MCF 10A (cell line): ENCODE measurements at regions of chr5 and their contacts with region 1.

Region 1: DNA sequence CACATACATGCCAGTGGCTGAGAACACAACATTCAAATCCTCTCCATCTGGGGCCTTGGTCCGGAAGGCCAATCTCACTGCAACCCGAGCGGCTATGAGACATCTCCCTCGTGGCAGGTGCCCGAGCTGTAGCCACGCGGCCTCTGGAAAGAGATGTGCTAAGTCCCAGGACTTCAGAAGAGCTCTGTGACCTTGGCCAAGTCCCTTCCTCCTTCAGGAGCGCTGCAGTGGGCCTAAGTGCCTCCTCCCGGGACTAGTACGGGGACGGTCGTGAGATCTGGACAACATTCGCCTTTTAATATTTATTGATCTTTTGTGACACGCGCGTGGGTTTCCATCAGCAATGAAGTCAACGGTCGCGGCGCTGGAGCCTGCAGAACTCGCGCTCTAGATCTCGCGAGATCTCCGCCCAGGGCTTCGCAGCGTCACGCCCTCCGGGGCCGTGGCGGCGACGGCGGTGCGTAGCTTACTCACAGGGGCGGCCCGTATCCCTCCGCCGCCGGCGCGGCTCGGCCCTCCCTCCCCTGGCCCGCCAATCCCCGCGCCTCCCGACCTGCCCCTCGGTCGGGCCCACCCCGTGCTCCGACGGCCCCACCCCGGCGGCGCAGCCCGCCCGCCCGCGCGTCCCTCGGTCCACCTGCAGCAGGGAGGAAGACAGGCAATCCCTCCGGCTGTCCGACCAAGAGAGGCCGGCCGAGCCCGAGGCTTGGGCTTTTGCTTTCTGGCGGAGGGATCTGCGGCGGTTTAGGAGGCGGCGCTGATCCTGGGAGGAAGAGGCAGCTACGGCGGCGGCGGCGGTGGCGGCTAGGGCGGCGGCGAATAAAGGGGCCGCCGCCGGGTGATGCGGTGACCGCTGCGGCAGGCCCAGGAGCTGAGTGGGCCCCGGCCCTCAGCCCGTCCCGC is at the start of gene UBE2D2:
- DNase-seq: peak; percentile 98
- H3K4me3 Mint-ChIP-seq: peak within 1 kb of the TSS; percentile 85
- H3K27ac Mint-ChIP-seq: peak within 1 kb of the TSS; percentile 88
- H3K4me1 Mint-ChIP-seq: peaks cover 12% of the 10 kb centered on the region
- H3K27me3 Mint-ChIP-seq: no peaks in the 10 kb centered on the region
- CTCF ChIP-seq: no peak
- total RNA-seq, gene UBE2D2: 306 and 329 TPM in 2 replicates

Region 2: DNA sequence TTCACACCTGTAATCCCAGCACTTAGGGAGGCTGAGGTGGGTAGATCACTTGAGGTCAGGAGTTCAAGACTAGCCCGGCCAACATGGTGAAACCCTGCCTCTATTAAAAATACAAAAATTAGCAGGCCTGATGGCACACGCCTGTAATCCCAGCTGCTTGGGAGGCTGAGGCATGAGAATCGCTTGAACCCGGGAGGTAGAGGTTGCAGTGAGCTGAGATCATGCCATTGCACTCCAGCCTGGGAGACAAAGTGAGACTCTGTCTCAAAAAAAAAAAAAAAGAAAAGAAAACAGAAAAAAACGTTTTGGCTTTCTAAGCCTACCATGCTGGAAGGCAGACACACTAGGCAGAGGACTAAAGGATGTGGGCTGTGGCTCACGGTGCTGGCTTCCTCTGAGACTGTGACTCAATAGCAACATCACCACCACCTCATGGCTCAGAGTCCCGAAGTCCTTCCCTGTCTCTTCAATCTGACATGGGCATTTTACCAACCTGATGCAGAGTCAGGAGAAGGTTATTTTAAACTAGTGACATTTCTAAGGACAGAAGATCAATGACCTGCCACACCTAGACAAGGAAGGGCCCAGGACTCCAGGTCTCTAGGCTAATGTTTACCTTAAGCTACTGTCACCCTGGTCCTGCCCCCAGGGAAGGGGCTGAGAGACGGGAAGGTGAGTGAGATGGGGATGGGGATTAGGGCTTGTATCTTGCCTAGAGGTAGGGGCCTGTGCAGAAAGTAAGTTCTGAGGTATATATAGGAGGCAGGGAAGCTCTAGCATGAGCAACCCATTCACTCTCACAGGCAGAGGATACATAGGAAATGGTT is 102.2 kb before region 1 on chr5:
- CTCF ChIA-PET with region 1: no interaction called
- POLR2A ChIA-PET with region 1: no interaction called
- intact Hi-C with region 1: no loop called
- DNase-seq: peak; percentile 33
- H3K4me3 Mint-ChIP-seq: no peak overlapping the region
- H3K27ac Mint-ChIP-seq: no peak overlapping the region
- H3K4me1 Mint-ChIP-seq: peaks cover 6% of the 10 kb centered on the region
- H3K27me3 Mint-ChIP-seq: no peaks in the 10 kb centered on the region
- CTCF ChIP-seq: no peak

Region 3: DNA sequence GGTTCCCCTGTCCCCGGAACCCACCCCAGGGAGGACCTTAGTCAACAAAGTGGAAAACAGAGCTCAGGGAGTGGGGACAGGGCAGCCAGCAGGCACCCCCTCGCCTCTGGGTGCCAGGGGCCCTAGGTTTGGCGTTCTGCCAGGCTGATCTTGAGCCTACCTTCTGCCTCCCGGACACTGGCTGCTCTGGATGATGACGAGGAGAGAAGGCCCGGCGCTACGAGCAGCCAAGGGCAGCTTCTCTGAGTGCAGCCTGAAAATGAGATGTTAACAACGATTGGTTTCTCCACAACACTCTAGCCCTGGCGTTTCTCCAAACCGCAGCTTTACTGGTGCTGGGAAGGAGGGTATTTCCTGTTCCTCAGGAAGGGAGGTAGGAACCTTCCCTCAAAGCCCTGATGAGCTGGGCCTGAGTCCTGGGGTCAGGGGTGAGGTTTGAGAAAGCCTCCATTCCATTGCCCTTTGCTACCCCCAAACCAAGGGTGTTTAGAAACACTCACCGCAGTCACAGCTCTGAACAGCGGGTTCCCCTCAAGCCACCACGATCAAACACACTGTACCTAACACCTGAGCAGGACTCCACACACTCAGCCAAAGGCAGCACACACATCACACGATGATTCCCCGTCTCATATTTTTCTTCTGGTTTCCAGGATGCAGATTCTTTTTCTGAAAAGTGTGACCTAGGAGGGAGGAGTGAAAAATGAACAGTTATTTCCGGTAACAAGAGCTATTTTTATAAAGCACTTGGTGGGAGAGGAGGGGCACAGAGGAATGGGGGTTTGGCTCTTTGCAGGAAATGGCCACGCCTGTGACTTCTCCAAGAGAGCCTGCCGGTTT is 78.7 kb before region 1 on chr5 and contains the start of gene STING1:
- CTCF ChIA-PET with region 1: interaction called, 3 read pairs
- POLR2A ChIA-PET with region 1: interaction called, 17 read pairs
- intact Hi-C with region 1: no loop called
- DNase-seq: peak; percentile 100
- H3K4me3 Mint-ChIP-seq: peak within 1 kb of the TSS; percentile 77
- H3K27ac Mint-ChIP-seq: peak within 1 kb of the TSS; percentile 92
- H3K4me1 Mint-ChIP-seq: peaks cover 24% of the 10 kb centered on the region
- H3K27me3 Mint-ChIP-seq: no peaks in the 10 kb centered on the region
- CTCF ChIP-seq: peak; percentile 1
- total RNA-seq, gene STING1: 33.1 and 35.1 TPM in 2 replicates

Region 4: GRCh38 chr5:139600336-139600949 is 39.4 kb after region 1 on chr5:
- CTCF ChIA-PET with region 1: interaction called, 4 read pairs
- POLR2A ChIA-PET with region 1: interaction called, 6 read pairs
- intact Hi-C with region 1: loop called (anchors 5 kb)
- DNase-seq: peak; percentile 84
- H3K4me3 Mint-ChIP-seq: no peak overlapping the region
- H3K27ac Mint-ChIP-seq: peak overlapping the region; percentile 40
- H3K4me1 Mint-ChIP-seq: peaks cover 16% of the 10 kb centered on the region
- H3K27me3 Mint-ChIP-seq: no peaks in the 10 kb centered on the region
- CTCF ChIP-seq: no peak

Region 5: DNA sequence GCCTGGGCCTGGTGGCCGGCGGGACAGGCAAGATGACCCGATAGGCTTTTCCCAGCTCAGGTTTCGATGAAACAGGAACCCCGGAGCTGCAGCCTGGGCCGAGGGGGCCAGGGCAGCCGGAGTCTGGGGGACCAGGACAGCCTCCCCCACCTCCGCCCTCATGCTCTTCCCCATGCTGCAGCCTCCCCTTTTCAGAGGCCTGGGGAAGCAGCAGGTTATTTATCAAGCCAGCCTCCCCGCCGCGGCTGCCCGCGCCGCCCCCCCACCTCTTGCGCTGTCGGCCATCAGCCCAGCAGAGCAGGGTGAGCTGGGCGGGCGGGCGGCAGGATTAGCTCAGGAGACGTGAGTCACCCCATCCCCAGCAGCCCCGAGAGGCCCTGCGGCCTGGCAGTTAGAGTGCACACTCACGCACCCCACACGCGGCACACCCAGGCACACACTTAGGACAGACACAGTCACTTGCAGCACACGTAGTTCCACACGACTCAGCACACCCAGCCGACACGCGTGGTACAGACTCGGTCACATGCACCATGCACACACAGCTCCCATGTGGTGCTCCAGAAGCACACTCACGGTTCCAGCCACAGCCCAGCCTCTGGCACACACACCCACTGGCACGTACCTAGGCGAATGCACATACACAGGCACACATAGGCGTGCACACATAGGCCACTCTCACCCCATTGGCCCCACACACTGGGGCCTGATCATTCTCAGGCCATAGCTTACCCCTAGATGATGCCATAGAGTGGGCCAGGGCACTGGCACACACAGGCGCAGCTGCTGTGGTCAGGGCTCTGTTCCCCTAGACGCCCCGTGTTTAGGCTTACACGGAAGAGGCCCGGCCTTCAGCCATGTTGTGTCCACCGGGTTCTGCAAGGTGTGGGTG is 100.2 kb after region 1 on chr5:
- CTCF ChIA-PET with region 1: no interaction called
- POLR2A ChIA-PET with region 1: interaction called, 12 read pairs
- intact Hi-C with region 1: no loop called
- DNase-seq: peak; percentile 97
- H3K4me3 Mint-ChIP-seq: peak overlapping the region; percentile 44
- H3K27ac Mint-ChIP-seq: peak overlapping the region; percentile 54
- H3K4me1 Mint-ChIP-seq: peaks cover 26% of the 10 kb centered on the region
- H3K27me3 Mint-ChIP-seq: no peaks in the 10 kb centered on the region
- CTCF ChIP-seq: no peak